ENCODE measurements at regions of chr16 and their contacts with region 1.

Region 1: DNA sequence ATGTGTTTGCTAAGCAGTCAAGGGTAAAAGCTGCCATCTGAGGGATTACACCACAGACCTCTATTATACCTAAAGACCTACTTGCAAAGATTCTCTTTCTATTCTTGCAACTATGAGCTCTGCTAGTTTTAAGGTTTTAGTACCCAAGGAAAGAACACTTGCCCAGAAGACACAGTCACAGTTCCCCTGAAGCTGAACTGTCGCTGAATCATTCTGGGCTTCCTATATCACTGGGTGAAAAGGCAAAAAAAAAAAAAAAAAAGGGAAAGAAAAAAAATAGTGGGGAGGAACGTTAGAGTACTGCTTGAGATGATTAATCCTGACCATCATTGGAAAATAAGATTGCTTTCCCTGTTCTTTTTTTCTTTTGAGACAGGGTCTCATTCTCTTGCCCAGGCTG is 37.9 kb downstream of the LYRM1 start:
- DNase-seq: no peak
- H3K4me3 ChIP-seq: no peak overlapping the region
- H3K27ac ChIP-seq: no peak overlapping the region
- H3K4me1 ChIP-seq: no peaks in the 10 kb centered on the region
- H3K27me3 ChIP-seq: no peaks in the 10 kb centered on the region
- CTCF ChIP-seq: no peak

Region 2: DNA sequence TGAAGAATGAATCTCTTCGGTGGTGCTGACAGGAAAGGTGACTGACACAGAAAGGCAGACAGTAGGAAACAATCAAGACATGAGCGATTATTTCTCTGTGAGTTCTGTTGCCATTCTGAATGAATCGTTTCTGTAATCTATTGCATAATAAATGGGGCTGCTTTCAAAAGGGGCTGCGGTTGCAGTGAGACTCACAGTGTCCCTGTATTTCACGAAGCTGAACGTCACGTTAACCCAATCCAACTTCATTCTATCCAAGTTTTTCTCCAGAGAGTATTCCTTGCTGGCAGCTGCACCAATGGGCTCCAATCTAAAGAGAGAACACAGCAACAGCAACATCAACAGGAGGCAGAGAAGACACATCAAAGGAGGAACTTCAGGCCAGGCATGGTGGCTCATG is 136.8 kb after region 1 on chr16:
- intact Hi-C with region 1: loop called (anchors 10 kb)
- DNase-seq: no peak
- H3K4me3 ChIP-seq: no peak overlapping the region
- H3K27ac ChIP-seq: no peak overlapping the region
- H3K4me1 ChIP-seq: no peaks in the 10 kb centered on the region
- H3K27me3 ChIP-seq: no peaks in the 10 kb centered on the region
- CTCF ChIP-seq: no peak

Region 3: DNA sequence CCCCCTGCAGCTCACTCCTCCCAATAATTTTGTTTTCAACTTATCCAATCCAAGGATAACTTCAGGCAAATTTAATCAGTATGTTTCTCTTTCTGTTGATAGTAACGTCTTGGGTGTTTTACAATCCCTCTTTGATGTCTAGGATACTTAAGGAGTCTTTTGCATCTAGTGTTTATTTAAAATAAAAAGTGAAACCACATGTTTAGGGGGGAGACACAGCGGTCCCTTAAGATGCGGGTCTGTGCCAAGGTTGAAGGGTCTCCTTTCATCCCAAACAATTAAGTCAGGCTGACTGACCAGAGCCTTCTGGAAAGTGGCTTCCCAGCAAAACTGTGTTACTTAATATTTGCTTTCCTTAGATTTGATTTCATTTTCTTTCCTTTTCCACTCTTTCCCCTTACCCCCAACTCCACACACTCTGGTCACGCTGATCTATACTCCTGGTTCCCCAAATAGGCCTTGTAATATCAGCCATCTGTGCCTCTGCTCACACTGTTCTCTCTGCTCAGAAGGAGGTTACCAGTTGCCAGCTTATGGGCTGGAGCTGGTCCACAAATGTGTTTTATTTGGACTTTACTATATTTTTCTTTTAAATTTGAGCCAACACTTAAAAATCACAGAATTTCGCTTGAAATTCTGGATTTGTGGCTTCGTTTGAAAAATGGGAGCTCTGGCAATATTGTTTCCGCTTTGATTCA is 306.2 kb after region 1 on chr16:
- intact Hi-C with region 1: no loop called
- DNase-seq: no peak
- H3K4me3 ChIP-seq: no peak overlapping the region
- H3K27ac ChIP-seq: no peak overlapping the region
- H3K4me1 ChIP-seq: no peaks in the 10 kb centered on the region
- H3K27me3 ChIP-seq: no peaks in the 10 kb centered on the region
- CTCF ChIP-seq: no peak